CD4-positive, alpha-beta memory T cell (primary cell): ENCODE measurements at regions of chr16 and their contacts with region 1.

Region 1: DNA sequence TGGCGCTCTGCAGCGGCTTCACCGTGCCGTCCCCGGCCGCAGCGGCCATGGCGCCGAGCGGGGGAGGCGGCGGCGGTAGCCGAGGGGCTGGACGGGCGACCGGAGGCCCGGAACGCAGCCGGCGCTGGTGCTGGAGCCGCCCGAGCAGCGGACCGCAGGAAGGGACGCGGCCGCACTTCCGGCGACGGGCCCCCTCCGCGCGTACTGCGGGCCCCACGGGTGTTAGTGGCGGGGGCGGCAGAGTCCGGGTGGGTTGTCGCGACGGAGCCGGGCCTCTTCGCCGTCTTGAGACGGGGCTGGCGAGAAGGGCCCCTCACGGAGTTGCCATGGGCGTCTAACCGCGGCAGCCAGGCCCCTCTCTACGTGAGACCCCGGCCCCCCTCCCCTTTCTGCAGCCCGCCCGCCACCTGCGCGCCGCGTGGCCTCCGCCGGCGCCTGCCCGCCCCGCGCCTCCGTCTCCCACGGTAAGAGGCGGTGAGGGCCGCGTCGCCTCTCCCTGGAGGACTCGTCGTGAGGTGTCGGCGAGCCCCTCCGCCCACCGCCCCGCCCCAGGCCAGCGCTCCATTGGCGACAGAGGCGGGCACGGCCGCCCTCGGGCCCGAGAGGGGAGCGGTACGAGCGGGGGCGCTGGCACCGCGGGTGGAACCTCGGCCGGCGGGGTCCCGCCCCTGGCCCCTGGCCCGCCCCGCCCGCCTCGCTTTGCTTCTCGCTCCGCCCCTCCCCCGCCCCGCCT is at the starts of genes VPS9D1 and ZNF276:
- DNase-seq: peak; percentile 81 to 84 (median 81)
- H3K4me3 ChIP-seq: peak within 1 kb of the TSS; percentile 78 to 96
- H3K4me3 Mint-ChIP-seq: peak within 1 kb of the TSS; percentile 92 to 99 (median 99)
- H3K27ac ChIP-seq: peak within 1 kb of the TSS; percentile 89
- H3K27ac Mint-ChIP-seq: peak within 1 kb of the TSS; percentile 97 to 100 (median 99)
- H3K4me1 ChIP-seq: peaks cover 48% of the 10 kb centered on the region
- H3K4me1 Mint-ChIP-seq: peaks cover 13 to 35% (median 25%) of the 10 kb centered on the region in 4 donors
- H3K27me3 ChIP-seq: no peaks in the 10 kb centered on the region
- H3K27me3 Mint-ChIP-seq: no peaks in the 10 kb centered on the region
- total RNA-seq, gene VPS9D1: 13.0 to 13.6 TPM
- total RNA-seq, gene ZNF276: 141 to 143 TPM

Region 2: GRCh38 chr16:89256651-89257254 is 464.2 kb before region 1 on chr16:
- CTCF ChIA-PET with region 1: no interaction called
- POLR2A ChIA-PET with region 1: no interaction called
- intact Hi-C with region 1: no loop called
- DNase-seq: peak; percentile 65 to 94 (median 68)
- H3K4me3 ChIP-seq: peak overlapping the region in 1 of 2 donors; percentile 32
- H3K4me3 Mint-ChIP-seq: peak overlapping the region; percentile 56 to 87 (median 70)
- H3K27ac ChIP-seq: no peak overlapping the region
- H3K27ac Mint-ChIP-seq: peak overlapping the region in 5 of 7 donors; percentile 18 to 88 (median 79)
- H3K4me1 ChIP-seq: peaks cover 17% of the 10 kb centered on the region
- H3K4me1 Mint-ChIP-seq: peaks cover 11 to 25% (median 19%) of the 10 kb centered on the region in 4 donors
- H3K27me3 ChIP-seq: peaks cover 7% of the 10 kb centered on the region
- H3K27me3 Mint-ChIP-seq: peaks cover 11% of the 10 kb centered on the region in 2 donors

Region 3: GRCh38 chr16:89602273-89602951 is 118.6 kb before region 1 on chr16:
- CTCF ChIA-PET with region 1: no interaction called
- POLR2A ChIA-PET with region 1: no interaction called
- intact Hi-C with region 1: no loop called
- DNase-seq: peak in 3 of 5 donors; percentile 31 to 73 (median 40)
- H3K4me3 ChIP-seq: no peak overlapping the region
- H3K4me3 Mint-ChIP-seq: peak overlapping the region in 7 of 8 donors; percentile 20 to 49 (median 41)
- H3K27ac ChIP-seq: no peak overlapping the region
- H3K27ac Mint-ChIP-seq: peak overlapping the region in 3 of 7 donors; percentile 7 to 60 (median 38)
- H3K4me1 ChIP-seq: peaks cover 15% of the 10 kb centered on the region
- H3K4me1 Mint-ChIP-seq: peaks cover 9 to 22% (median 13%) of the 10 kb centered on the region in 4 donors
- H3K27me3 ChIP-seq: no peaks in the 10 kb centered on the region
- H3K27me3 Mint-ChIP-seq: no peaks in the 10 kb centered on the region

Region 4: GRCh38 chr16:89686520-89687091 is 34.4 kb before region 1 on chr16 and contains the start of gene CDK10:
- CTCF ChIA-PET with region 1: no interaction called
- POLR2A ChIA-PET with region 1: interaction called, 8 read pairs
- intact Hi-C with region 1: loop called (anchors 1 kb)
- DNase-seq: peak; percentile 78 to 95 (median 87)
- H3K4me3 ChIP-seq: peak within 1 kb of the TSS; percentile 57 to 84
- H3K4me3 Mint-ChIP-seq: peak within 1 kb of the TSS; percentile 84 to 96 (median 92)
- H3K27ac ChIP-seq: peak within 1 kb of the TSS; percentile 84
- H3K27ac Mint-ChIP-seq: peak within 1 kb of the TSS; percentile 78 to 98 (median 94)
- H3K4me1 ChIP-seq: peaks cover 14% of the 10 kb centered on the region
- H3K4me1 Mint-ChIP-seq: peaks cover 9 to 25% (median 13%) of the 10 kb centered on the region in 4 donors
- H3K27me3 ChIP-seq: no peaks in the 10 kb centered on the region
- H3K27me3 Mint-ChIP-seq: no peaks in the 10 kb centered on the region
- total RNA-seq, gene CDK10: 134 to 140 TPM

Region 5: DNA sequence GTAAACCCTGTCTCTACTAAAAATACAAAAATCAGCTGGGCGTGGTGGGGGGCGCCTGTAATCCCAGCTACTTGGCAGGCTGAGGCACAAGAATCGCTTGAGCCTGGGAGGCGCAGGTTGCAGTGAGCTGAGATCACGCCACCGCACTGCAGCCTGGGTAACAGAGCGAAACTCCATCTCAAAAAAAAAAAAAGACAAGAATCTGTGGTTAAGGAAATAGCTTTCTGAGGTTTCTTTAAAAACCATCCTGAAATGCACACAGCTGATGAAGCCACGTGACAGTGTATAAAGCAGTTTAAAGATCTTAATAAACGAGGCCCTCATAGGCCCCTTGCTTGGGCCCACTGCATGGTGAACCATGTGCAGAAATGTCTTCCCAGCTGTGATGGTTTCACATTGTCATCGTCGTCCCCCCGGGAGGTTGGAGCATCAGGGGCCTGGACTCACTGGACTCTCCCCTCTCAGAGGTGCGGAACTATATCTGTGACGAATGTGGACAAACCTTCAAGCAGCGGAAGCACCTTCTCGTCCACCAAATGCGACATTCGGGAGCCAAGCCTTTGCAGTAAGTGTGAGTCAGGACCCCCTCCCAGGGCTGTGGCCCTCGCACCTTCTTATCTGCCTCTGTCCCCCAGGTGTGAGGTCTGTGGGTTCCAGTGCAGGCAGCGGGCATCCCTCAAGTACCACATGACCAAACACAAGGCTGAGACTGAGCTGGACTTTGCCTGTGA is 16.5 kb after region 1 on chr16:
- CTCF ChIA-PET with region 1: interaction called, 17 read pairs
- POLR2A ChIA-PET with region 1: interaction called, 288 read pairs
- intact Hi-C with region 1: loop called (anchors 1 kb)
- DNase-seq: peak; percentile 76 to 82 (median 81)
- H3K4me3 ChIP-seq: no peak overlapping the region
- H3K4me3 Mint-ChIP-seq: peak overlapping the region; percentile 20 to 82 (median 56)
- H3K27ac ChIP-seq: peak overlapping the region; percentile 31
- H3K27ac Mint-ChIP-seq: peak overlapping the region; percentile 74 to 92 (median 87)
- H3K4me1 ChIP-seq: peaks cover 49% of the 10 kb centered on the region
- H3K4me1 Mint-ChIP-seq: peaks cover 23 to 69% (median 39%) of the 10 kb centered on the region in 4 donors
- H3K27me3 ChIP-seq: no peaks in the 10 kb centered on the region
- H3K27me3 Mint-ChIP-seq: no peaks in the 10 kb centered on the region

Region 6: DNA sequence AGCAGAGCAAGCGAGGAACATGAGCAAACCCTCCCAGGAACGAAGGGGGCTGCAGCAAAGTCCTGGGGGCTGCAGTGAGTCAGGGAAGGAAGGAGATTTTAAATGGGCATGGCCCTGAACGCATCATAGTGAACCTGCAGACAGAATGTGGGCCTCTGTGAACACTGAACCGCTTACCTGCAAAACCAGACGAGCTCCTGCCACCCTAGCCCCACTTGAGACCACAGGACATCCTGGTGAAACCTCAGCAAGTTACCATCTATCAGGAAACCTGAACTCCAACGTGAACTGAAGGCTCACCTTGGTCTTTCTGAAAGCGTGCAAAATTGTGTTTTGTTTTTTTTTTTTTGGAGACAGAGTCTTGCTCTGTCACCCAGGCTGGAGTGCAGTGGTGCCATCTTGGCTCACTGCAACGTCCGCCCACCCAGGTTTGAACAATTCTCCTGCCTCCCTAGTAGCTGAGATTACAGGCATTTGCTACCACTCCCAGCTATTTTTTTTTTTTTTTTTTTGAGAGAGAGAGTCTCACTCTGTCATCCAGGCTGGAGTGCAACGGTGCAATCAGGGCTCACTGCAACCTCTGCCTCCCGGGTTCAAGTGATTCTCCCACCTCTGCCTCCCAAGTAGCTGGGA is 64.7 kb after region 1 on chr16:
- CTCF ChIA-PET with region 1: interaction called, 3 read pairs
- POLR2A ChIA-PET with region 1: interaction called, 23 read pairs
- intact Hi-C with region 1: no loop called
- DNase-seq: peak; percentile 68 to 83 (median 71)
- H3K4me3 ChIP-seq: no peak overlapping the region
- H3K4me3 Mint-ChIP-seq: peak overlapping the region in 7 of 8 donors; percentile 13 to 82 (median 67)
- H3K27ac ChIP-seq: no peak overlapping the region
- H3K27ac Mint-ChIP-seq: peak overlapping the region; percentile 43 to 95 (median 77)
- H3K4me1 ChIP-seq: peaks cover 33% of the 10 kb centered on the region
- H3K4me1 Mint-ChIP-seq: peaks cover 24 to 42% (median 29%) of the 10 kb centered on the region in 4 donors
- H3K27me3 ChIP-seq: no peaks in the 10 kb centered on the region
- H3K27me3 Mint-ChIP-seq: no peaks in the 10 kb centered on the region

Region 7: GRCh38 chr16:89860747-89861304 is 139.8 kb after region 1 on chr16:
- CTCF ChIA-PET with region 1: interaction called, 3 read pairs
- POLR2A ChIA-PET with region 1: interaction called, 13 read pairs
- intact Hi-C with region 1: loop called (anchors 5 kb)
- DNase-seq: peak; percentile 71 to 80 (median 74)
- H3K4me3 ChIP-seq: no peak overlapping the region
- H3K4me3 Mint-ChIP-seq: peak overlapping the region in 2 of 8 donors; percentile 30 to 39
- H3K27ac ChIP-seq: no peak overlapping the region
- H3K27ac Mint-ChIP-seq: peak overlapping the region in 5 of 7 donors; percentile 44 to 85 (median 80)
- H3K4me1 ChIP-seq: peaks cover 41% of the 10 kb centered on the region
- H3K4me1 Mint-ChIP-seq: peaks cover 27 to 42% (median 34%) of the 10 kb centered on the region in 4 donors
- H3K27me3 ChIP-seq: no peaks in the 10 kb centered on the region
- H3K27me3 Mint-ChIP-seq: no peaks in the 10 kb centered on the region